Gastrocnemius medialis (tissue), 4 donors: ENCODE measurements at regions of chr19 and their contacts with region 1.

Region 1: DNA sequence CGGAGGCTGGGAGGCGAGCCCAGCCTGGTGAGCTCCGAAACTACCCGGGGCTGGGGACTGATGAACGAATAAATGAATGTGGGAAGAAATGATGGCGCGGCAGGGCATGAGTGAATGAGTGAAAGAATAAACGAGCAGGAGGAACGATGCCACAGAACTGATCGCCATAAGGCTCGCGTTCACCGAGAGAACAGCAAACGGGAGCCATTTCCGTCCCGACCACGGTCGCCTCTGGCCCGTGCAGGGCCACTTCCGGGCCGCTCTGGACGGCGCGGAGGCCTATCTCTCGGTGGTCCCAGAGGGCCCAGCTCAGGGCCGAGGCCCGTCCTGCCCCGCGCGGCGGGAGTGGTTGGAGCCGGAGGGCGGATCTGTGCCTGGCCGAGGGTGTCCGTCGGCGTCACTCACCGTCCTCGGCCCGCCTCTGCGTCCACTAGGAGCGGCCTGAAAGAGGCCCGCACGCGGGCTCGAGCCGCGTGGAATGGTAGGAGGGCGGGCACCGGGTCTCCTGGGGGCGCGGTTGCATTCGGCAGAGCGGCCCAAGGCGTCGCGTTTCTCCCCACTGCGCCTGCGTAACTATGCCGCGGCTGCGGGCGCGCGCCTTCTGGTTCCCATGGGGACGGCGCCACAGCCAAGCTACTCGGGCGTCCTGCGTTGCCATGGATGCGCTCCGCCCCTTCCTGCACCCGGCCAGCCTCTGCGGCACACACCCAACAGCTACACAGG is at the start of gene ZNF497:
- DNase-seq: peak; percentile 92 to 93
- ATAC-seq: peak; percentile 94 to 96
- H3K4me3 ChIP-seq: peak within 1 kb of the TSS; percentile 78 to 95 (median 90)
- H3K27ac ChIP-seq: peak within 1 kb of the TSS; percentile 87 to 92 (median 91)
- H3K4me1 ChIP-seq: peaks cover 0 to 8% of the 10 kb centered on the region in 2 donors
- H3K27me3 ChIP-seq: peaks cover 0 to 2% (median 0%) of the 10 kb centered on the region in 3 donors
- CTCF ChIP-seq: peak in 2 of 5 experiments; percentile 2 to 17
- POLR2A ChIP-seq: peak; percentile 61 to 62
- total RNA-seq, gene ZNF497: 0.07 to 0.87 (median 0.36) TPM in 3 of 4 donors, not detected in the other

Region 2: DNA sequence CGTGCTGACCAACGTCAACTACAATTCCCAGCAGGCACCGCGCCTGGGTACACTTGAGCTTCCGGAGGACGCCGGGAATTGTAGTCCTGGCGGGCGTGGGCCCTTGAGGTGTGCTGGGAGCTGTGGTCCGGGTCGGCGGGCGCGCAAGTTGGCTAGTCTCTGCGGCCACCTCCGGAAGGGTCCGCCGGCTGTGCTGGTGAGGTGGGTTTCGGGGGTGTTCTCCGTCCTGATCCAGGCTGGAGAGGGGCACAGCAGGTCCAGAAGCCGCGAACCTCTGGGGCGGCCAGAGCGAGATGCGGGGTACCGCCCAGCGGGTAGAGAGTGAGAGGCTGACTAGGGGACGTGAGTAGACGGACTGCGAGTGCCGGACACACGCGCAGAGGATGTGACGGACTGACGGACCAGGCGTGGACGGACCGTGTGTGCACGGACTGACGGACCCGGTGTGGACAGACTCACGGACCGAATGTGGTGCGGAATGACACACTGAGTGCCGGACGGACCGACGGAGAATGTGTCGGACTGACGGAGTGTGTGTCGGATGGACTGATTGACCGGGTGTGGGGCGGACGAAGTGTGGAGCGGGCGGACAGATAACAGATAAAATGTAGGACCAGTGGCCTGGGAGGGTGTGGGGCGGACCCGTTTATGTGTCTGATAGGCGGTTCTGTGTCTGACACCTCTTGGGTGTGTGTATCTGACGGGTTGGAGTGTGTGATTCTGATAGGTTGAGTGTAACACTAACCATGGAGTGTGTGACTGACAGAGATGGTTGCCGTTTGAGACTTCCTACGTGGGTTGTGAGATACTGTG is 35.3 kb before region 1 on chr19 and contains the start of gene ZSCAN22:
- in situ Hi-C with region 1: no loop called
- intact Hi-C with region 1: loop called (anchors 2 kb)
- DNase-seq: peak; percentile 95 to 96
- ATAC-seq: peak; percentile 98
- H3K4me3 ChIP-seq: peak within 1 kb of the TSS; percentile 91 to 96 (median 94)
- H3K27ac ChIP-seq: peak within 1 kb of the TSS; percentile 94 to 99 (median 98)
- H3K4me1 ChIP-seq: peaks cover 24 to 29% of the 10 kb centered on the region in 2 donors
- H3K27me3 ChIP-seq: no peaks in the 10 kb centered on the region
- CTCF ChIP-seq: no peak
- POLR2A ChIP-seq: peak; percentile 79 to 81
- total RNA-seq, gene ZSCAN22: 1.1 to 2.4 (median 1.8) TPM